Activated CD4-positive, alpha-beta T cell treated with anti-CD3 and anti-CD28 coated beads for 36 hours (primary cell): ENCODE measurements at regions of chr9 and their contacts with region 1.

Region 1: DNA sequence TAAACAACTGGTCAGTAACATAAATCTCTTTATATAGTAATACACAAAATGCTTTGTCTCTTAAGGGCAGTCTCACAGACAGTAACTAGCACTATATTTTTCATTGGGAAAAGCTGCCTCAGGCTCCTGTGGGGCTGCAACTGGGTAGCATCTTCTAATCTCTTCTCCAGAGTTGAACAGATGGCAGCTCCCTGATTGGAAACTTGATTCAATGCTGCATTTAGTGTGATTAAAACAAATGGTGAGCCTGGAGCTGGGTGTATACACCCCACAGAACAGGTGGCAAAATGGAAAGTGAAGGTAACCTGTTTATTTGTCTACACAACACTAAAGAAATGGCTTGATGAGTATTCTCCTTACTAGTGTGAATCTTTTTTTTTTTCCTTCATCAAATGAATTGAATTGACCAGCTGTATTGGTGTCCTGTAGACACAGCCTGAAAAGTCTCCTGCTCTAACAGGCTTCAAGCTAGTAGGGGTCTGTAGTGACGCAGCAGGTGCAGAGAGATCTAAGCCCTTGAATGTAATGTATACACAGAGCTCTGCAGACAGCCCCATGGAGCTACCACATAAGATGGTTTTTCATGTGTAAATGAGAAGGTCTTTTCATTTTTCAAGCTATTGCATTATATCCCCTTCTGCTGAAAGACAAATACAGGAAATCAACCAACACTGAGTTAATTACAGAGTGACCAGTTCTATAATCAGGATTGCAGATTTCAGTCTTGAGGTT is 43.3 kb downstream of the IZUMO3 start:
- DNase-seq: no peak
- ATAC-seq: no peak
- H3K4me3 Mint-ChIP-seq: no peak overlapping the region
- H3K27ac Mint-ChIP-seq: no peak overlapping the region
- H3K4me1 Mint-ChIP-seq: no peaks in the 10 kb centered on the region
- H3K27me3 Mint-ChIP-seq: no peaks in the 10 kb centered on the region

Region 2: GRCh38 chr9:24464319-24464951 is 37.9 kb before region 1 on chr9:
- CTCF ChIA-PET with region 1: no interaction called
- POLR2A ChIA-PET with region 1: no interaction called
- intact Hi-C with region 1: no loop called
- DNase-seq: no peak
- ATAC-seq: no peak
- H3K4me3 Mint-ChIP-seq: no peak overlapping the region
- H3K27ac Mint-ChIP-seq: no peak overlapping the region
- H3K4me1 Mint-ChIP-seq: no peaks in the 10 kb centered on the region
- H3K27me3 Mint-ChIP-seq: no peaks in the 10 kb centered on the region

Region 3: DNA sequence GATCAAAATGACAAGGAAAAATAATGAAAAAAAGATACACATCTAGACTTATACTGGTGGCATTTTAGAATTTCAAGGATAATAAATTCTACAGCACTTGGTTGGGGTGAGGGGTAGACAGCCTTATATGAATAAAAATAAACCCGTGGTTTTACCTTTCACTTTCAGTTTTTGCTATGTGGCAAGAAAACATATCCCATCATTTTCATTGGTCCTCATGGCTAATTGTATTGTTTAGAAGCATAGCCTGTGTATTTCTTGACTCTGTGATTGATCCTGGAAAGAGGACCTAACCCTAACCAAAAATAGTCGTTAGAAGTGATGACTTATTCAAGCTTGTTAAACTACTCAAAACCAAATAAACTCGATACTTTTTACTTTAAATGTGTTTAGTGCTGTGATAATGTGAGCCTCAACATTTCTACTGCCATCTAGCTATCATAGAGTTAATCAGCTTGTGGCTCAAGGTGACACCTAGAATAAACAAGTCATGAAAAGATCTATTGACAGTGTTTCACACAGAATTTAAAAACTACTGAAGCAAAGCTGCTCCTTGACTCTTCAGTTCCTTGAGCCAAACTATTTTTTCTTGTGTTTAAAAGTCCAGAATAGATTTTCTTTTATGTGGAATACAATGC is 196.6 kb after region 1 on chr9:
- CTCF ChIA-PET with region 1: no interaction called
- POLR2A ChIA-PET with region 1: no interaction called
- intact Hi-C with region 1: loop called in 1 of 2 experiments (anchors 10 kb)
- DNase-seq: no peak
- ATAC-seq: no peak
- H3K4me3 Mint-ChIP-seq: no peak overlapping the region
- H3K27ac Mint-ChIP-seq: no peak overlapping the region
- H3K4me1 Mint-ChIP-seq: peaks cover 4% of the 10 kb centered on the region
- H3K27me3 Mint-ChIP-seq: no peaks in the 10 kb centered on the region

Region 4: DNA sequence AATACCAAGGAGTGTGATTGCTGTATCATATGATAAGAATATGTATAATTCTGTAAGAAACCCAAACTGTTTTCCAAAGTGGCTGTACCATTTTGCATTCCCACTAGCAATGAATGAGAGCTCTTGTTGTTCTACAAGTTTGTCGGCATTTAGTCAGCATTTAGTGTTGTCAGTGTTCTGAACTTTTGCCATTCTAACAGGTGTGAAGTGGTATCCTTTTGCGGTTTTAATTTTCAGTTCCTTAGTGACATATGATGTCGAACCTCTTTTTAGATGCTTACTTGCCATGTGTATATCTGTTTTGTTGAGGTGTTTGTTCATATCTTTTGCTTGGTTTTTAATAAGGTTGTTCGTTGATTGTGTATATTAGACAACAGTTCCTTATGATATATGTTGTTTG is 339.6 kb after region 1 on chr9:
- CTCF ChIA-PET with region 1: no interaction called
- POLR2A ChIA-PET with region 1: no interaction called
- intact Hi-C with region 1: no loop called
- DNase-seq: no peak
- ATAC-seq: no peak
- H3K4me3 Mint-ChIP-seq: no peak overlapping the region
- H3K27ac Mint-ChIP-seq: no peak overlapping the region
- H3K4me1 Mint-ChIP-seq: no peaks in the 10 kb centered on the region
- H3K27me3 Mint-ChIP-seq: no peaks in the 10 kb centered on the region